ENCODE measurements at regions of chr19 and their contacts with region 1.

Region 1: DNA sequence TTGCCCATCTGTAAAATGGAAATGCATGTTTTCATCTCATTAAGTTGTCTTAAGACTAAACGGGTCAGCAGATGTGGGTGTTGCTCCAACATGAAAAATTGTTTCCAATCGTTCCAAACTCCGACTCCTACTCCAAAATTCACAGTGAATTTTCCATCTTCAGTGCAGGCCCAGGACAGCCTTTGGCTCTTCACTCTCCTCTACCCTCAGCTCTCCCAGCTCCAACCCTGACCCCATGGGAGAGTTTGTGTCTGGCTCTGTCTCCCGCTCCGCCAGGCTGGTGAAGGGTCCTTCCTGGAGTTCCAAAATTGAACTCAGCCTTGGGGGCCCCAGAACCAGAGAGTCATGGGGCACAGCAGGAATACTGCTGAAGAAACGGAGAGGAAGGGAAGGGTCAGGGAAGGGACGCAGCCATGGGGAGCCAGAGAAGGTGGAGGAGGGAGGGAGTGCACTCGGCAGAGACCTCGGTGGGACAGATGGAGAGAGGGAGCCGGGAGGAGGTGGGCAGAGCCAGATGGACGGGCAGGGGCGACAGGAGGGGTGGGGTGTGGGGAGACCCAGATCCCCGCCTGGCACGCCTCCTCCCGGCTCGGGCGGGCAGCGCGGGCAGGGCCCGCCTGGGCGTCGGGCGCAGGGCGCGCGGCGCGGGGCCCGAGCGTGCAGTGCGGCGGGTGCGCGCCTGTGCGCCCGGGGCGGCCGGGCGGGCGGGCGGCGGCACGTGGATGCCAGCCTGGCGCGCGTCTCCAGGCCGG is 45.6 kb downstream of the CELF5 start:
- DNase-seq: no peak

Region 2: DNA sequence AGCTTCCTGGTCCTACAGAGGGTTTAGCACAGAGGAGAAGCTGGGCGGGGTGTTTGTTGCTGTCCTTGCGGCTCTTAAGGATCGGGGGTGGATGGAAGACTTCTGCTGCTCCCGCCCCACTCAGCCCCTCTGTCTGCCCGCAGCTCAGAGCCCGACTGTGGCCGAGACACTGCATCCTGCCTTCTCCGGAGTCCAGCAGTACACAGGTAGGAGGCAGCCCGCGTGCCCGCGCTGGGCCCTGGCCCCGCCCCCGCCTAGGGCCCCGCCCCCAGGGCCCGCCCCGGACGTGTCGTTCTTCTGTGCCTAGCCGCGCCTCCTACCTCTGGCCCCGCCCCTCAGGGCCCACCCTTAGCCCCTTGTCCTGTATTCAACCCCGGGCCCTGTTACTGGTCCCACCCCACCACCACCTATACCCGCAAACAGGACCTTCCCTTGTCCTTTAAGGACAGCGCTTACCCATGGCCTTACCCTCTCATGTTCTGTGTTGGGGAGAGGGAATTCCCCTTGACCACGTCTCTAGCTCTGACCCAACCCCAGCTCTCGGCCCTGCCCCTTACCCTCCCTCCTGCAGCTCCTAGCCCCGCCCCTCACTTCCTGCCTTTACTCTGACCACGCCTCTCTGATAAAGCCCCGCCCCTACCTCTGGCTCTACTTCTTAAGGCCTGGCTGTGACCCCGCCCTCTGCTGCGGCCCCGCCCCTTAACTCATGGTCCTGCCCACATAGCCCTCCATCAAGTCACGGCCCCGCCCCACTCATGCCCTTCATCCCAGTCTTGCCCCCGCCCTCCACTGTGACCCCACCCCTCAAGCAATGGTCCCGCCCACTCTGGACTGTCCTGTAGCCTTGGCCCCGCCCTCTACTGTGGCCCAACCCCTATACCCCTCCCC is 14.9 kb after region 1 on chr19:
- intact Hi-C with region 1: no loop called
- DNase-seq: no peak

Region 3: DNA sequence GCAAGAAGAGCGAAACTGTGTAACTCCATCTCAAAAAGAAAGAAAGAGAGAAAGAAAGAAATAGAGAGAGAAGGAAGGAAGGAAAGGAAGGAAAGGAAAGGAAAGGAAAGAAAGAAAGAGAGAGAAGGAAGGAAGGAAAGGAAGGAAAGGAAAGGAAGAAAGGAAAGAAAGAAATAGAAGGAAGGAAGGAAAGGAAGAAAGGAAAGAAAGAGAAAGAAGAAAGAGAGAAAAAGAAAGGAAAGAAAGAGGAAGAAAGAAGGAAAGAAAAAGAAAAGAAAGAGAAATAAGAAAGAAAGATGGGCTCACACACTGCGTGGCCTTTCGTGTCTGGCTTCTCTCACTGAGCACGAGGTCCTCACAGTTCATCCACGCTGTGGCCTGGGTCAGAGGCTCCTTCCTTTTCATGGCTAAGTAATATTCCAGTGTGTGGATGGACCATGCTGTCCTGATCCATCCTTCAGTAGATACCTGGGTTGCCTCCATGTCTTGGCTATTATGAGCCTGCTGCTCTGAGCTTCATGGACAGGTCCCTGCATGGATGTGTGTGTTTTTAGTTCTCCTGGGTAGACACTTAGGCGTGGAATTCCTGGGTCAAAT is 28.9 kb after region 1 on chr19:
- intact Hi-C with region 1: loop called in 1 of 2 experiments (anchors 1 kb)
- DNase-seq: no peak

Region 4: DNA sequence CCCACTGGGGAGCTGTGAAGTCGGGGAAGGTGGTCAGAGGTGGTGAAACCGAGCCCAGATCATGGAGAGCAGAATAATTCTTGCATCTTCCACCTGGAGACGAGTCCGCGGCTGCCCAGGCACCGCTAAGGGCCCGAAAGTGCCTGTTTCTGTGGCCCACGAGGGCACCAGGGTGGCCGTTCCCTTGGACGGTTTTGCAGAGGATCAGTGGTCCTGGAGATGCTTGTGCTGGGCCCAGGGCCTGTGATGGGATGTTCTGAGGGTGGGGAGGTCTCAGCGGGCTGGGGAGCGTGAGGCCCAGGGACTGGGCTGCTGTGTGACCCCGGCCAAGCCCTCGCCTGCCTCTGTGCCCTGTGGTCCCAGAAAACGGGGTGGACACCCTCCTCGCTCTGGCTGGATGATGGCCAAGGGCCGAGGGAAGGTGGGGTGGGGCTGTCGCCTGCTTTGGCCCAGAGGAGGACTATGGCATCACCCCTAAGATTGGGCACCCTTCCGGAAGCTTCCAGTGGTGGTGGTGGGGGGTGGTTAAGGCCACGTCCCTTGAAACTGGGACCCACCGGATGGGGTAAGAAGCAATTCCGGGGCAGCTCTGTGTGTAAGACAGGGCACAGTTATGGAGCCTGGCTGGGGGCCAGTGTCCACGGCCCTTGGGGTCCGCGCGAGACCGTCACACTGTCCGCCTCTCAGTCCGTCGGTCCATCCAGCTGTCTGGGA is 45.0 kb after region 1 on chr19:
- intact Hi-C with region 1: no loop called
- DNase-seq: no peak

Measured in posterior vena cava (tissue), 2 donors.